ENCODE measurements at regions of chr12 and their contacts with region 1.

Region 1: GRCh38 chr12:117874842-117875434 is 93.9 kb downstream of the KSR2 start:
- DNase-seq: peak; percentile 72
- CTCF ChIP-seq: peak; percentile 74

Region 2: DNA sequence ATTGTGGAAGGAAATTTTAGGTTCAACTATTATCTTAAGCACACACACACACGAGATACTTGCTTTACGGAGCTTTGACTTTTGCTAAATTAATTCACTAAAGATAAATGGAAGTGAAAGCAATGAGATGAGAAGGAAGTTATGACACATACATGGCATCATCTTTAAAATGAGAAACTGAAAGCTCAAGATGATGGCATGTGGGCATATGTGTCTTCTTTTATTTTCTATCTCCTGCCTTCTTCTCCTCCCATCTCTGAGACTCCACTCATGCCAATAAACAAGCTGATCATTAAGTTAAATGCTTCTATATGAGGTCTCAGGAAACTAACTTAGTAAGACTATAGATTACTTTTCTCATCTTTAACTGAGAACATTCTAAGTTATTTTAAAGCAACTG is 1814.2 kb before region 1 on chr12:
- CTCF ChIA-PET with region 1: no interaction called
- POLR2A ChIA-PET with region 1: no interaction called
- DNase-seq: peak; percentile 51
- CTCF ChIP-seq: no peak

Region 3: DNA sequence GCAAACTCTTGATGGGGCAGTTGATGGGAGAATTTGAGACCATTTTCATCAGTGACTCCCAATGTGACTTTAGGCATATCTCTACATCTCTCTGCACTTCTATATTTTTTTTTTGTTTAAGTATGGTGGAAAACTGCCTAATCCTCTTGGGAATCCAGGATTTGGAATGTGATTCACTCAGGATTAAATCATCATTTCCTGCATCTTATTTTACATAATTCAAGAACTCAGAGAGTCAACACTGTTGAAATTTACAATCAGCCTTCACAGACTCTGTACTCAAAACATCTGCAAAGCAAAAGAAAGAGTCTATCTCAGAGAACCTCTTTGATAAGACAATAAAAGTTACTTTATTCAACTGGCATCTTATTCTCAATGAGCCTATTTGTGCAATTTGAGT is 252.9 kb before region 1 on chr12:
- CTCF ChIA-PET with region 1: no interaction called
- POLR2A ChIA-PET with region 1: no interaction called
- DNase-seq: no peak
- CTCF ChIP-seq: no peak

Region 4: GRCh38 chr12:117850048-117850447 is 24.9 kb before region 1 on chr12:
- CTCF ChIA-PET with region 1: interaction called, 20 read pairs
- POLR2A ChIA-PET with region 1: no interaction called
- DNase-seq: peak; percentile 55
- CTCF ChIP-seq: peak; percentile 70

Region 5: DNA sequence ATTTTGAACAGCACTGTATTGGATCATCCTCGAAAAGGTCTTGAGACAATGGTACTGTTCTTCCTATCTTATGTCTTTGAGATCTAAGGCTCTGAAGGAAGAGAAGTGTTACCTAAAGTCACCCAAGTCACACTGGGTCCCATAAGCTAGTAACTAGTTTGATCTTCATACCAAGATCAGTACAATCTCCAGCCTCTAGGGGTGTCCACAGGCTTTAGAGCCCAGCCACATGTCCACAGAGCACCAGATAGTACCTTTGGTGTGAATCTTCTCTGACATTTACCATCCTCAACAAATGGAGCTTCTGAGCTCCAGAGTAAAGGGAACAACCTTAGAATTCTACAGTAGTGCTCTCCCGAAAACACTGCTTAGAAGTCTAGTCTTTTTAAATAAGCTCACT is 15.2 kb after region 1 on chr12:
- CTCF ChIA-PET with region 1: interaction called, 24 read pairs
- POLR2A ChIA-PET with region 1: no interaction called
- DNase-seq: no peak
- CTCF ChIP-seq: peak; percentile 5

Region 6: GRCh38 chr12:117897372-117898161 is 22.6 kb after region 1 on chr12:
- CTCF ChIA-PET with region 1: interaction called, 12 read pairs
- POLR2A ChIA-PET with region 1: no interaction called
- DNase-seq: no peak
- CTCF ChIP-seq: no peak

Region 7: DNA sequence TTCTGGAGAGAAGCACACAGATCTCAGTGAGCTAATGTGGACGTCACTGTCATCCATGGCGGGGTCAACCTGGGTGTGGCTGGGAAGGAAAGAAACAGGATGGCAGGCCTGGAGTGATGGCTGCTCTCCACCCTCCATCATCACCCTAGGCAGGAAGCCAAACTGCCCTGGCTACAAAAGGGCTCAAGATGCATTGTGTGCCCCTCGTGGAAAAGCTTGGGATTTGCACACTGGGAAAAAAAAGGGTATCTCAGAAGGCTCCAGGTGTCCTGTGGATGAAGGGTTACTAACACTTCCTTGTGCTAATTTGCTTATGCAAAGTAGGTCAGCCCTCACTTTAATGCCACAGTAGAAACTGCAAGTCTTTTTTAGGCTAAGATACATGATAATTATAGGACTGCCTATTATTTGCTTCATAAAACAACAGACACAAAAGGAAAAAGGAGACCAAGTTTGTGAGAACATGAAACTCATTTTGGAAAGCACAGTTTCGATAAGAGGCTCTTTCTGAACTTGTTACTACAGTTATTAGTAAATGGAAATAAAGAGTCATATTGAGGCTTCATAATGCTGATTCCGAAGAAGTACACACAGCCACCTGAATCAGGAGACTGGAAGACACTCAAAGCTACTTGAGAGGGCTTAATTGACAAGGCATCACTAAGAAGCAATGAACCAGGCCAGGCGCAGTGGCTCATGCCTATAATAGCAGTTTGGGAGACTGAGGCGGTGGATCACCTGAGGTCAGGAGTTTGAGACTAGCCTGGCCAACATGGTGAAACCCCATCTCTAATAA is 160.5 kb after region 1 on chr12:
- CTCF ChIA-PET with region 1: interaction called, 18 read pairs
- POLR2A ChIA-PET with region 1: no interaction called
- DNase-seq: peak; percentile 67
- CTCF ChIP-seq: no peak

Region 8: DNA sequence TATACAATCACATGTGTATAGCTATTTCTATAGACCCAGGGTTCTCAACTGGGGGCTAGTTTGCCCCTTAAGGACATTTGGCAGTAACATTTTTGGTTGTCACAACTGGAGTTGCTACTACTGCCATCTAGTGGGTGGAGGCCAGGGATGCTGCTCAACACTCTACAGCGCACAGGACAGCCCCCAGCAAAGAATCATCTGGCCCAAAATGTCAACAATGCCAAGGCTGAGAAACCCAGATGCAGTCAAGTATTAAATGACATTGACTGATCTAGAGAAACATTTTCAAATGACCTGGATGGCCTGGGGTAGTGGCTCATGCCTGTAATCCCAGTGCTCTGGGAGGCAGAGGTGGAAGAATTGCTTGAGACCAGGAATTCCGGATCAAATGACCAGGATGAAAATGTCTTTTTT is 180.2 kb after region 1 on chr12:
- CTCF ChIA-PET with region 1: interaction called, 22 read pairs
- POLR2A ChIA-PET with region 1: no interaction called
- DNase-seq: peak; percentile 49
- CTCF ChIP-seq: peak; percentile 68

Region 9: GRCh38 chr12:118061011-118061875 is 186.3 kb after region 1 on chr12 and contains the start of gene WSB2:
- CTCF ChIA-PET with region 1: interaction called, 22 read pairs
- POLR2A ChIA-PET with region 1: no interaction called
- DNase-seq: peak; percentile 79
- CTCF ChIP-seq: no peak

Measured in GM10248 (cell line).